Activated naive CD4-positive, alpha-beta T cell treated with anti-CD3 and anti-CD28 coated beads for 36 hours (primary cell): ENCODE measurements at regions of chr21 and their contacts with region 1.

Region 1: DNA sequence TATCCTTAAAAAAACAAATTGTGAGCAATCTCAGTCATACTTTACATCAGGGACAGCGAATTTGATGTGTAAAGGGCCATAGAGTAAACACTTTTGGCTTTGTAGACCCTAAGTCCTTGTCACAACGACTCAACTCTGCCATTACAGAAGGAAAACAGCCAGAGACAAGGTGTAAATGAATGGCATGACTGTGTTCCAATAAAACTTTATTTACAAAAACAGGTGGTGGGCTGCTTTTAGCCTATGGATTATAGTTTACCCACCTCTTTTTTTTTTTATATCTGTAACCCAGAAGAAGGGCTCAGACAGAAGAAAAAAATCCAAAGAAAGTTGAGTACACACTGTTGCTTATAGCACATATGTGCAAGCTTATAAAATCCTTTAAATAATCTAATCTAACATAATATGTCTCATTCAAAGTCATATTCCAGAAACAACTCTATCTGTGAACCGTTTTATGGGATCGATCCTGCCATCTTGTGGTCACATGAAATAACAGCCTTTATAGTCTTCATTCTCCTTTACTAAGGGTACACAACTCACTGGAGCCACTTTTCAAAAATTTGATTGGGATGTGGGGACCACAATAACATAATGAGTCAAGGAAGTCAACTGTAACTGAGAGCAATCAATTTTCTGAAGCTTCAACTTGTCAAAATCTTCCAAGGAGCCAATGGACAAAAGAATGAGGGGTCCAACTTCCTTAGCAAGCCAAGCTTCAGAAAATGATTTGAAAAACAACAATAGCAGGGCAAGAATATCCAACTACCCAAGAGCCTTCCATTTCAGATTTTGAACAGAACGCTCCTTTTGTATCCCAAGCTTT is 142.2 kb upstream of the KRTAP19-8 start:
- DNase-seq: peak; percentile 52
- H3K4me3 Mint-ChIP-seq: peak overlapping the region; percentile 87
- H3K27ac Mint-ChIP-seq: peak overlapping the region; percentile 98
- H3K4me1 Mint-ChIP-seq: peaks cover 75% of the 10 kb centered on the region
- H3K27me3 Mint-ChIP-seq: no peaks in the 10 kb centered on the region

Region 2: GRCh38 chr21:30942192-30942591 is 238.3 kb before region 1 on chr21:
- CTCF ChIA-PET with region 1: no interaction called
- intact Hi-C with region 1: no loop called
- DNase-seq: no peak
- H3K4me3 Mint-ChIP-seq: no peak overlapping the region
- H3K27ac Mint-ChIP-seq: no peak overlapping the region
- H3K4me1 Mint-ChIP-seq: no peaks in the 10 kb centered on the region
- H3K27me3 Mint-ChIP-seq: peaks cover 1% of the 10 kb centered on the region

Region 3: DNA sequence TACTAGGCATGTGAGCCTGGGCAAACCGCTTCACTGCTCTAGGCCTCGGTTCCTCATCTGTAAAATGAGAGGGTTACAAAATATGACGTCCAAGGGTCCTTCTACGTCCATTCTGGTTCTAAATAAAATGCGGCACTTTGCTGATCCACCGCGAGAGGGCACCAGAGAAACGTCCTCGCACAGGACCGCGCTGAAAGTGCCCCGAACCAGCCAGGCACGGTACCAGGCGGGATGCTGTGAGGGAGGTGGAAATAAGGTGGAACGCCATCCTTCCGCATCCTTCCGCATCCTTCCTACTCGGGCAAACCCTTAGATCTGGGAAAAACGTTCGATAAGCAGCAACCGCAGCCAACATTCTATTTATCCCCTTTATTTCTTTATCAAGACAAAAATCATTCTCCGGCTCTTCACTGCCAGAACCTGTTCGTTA is 81.9 kb before region 1 on chr21:
- CTCF ChIA-PET with region 1: interaction called, 19 read pairs
- intact Hi-C with region 1: loop called (anchors 1 kb)
- DNase-seq: peak; percentile 83
- H3K4me3 Mint-ChIP-seq: peak overlapping the region; percentile 29
- H3K27ac Mint-ChIP-seq: no peak overlapping the region
- H3K4me1 Mint-ChIP-seq: peaks cover 24% of the 10 kb centered on the region
- H3K27me3 Mint-ChIP-seq: peaks cover 3% of the 10 kb centered on the region

Region 4: DNA sequence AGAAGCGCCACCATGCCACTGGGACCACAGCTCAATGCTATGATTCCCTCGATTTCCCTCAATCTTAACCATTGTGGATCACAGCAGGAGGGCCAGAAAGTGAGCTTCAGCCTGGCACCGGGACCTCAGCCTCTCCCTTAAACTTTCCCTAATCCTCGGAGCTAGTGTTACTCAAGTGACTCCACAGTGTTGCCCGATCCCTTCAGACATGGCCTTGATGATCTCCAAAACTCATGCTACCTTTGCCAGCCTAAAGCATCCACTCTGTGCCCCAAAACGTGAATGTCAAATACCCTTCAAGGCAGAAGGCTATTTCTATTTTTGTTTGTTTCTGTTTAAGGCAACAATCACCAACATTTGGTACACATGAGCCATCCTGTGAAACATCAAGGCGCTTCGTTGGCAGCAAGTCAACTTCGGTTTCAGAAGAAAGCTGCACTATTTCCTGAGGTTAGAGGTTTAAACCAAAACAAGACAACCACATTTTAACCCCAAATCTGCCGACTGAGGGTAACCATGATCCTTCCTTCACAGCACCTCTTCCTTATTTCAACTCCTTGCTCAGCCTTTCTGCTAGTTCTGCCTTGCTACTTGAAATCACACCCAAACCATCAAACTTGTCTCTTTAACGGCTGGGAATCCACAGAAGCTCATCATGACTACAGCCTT is 47.8 kb before region 1 on chr21:
- CTCF ChIA-PET with region 1: interaction called, 23 read pairs
- intact Hi-C with region 1: loop called (anchors 1 kb)
- DNase-seq: peak; percentile 89
- H3K4me3 Mint-ChIP-seq: peak overlapping the region; percentile 32
- H3K27ac Mint-ChIP-seq: peak overlapping the region; percentile 83
- H3K4me1 Mint-ChIP-seq: peaks cover 64% of the 10 kb centered on the region
- H3K27me3 Mint-ChIP-seq: no peaks in the 10 kb centered on the region

Region 5: DNA sequence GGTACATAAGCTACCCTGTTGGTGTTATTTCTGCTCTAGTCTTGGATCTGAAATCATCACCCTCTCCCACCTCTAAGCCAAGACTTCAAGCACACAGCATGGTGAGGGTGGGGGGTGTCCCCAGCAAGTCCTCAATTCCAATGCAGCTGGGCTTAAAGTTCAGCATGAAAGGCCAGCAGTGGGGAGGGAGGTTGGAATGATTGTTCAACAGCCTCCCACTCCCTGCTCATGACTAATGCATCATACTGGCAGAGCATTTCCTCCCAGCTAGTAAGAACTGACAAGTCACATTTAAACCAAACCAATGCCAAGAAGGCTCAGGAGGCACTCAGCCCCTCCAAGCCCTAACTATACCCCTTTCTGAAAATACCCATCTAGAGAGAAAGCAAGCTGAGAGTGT is 113.5 kb after region 1 on chr21:
- CTCF ChIA-PET with region 1: no interaction called
- intact Hi-C with region 1: loop called (anchors 1 kb)
- DNase-seq: peak; percentile 88
- H3K4me3 Mint-ChIP-seq: no peak overlapping the region
- H3K27ac Mint-ChIP-seq: peak overlapping the region; percentile 84
- H3K4me1 Mint-ChIP-seq: peaks cover 44% of the 10 kb centered on the region
- H3K27me3 Mint-ChIP-seq: no peaks in the 10 kb centered on the region

Region 6: GRCh38 chr21:31354604-31355443 is 174.4 kb after region 1 on chr21:
- CTCF ChIA-PET with region 1: interaction called, 3 read pairs
- intact Hi-C with region 1: loop called (anchors 1 kb)
- DNase-seq: peak; percentile 94
- H3K4me3 Mint-ChIP-seq: peak overlapping the region; percentile 2
- H3K27ac Mint-ChIP-seq: peak overlapping the region; percentile 88
- H3K4me1 Mint-ChIP-seq: peaks cover 47% of the 10 kb centered on the region
- H3K27me3 Mint-ChIP-seq: no peaks in the 10 kb centered on the region

Region 7: GRCh38 chr21:31580866-31581276 is 400.4 kb after region 1 on chr21:
- CTCF ChIA-PET with region 1: interaction called, 29 read pairs
- intact Hi-C with region 1: no loop called
- DNase-seq: peak; percentile 88
- H3K4me3 Mint-ChIP-seq: no peak overlapping the region
- H3K27ac Mint-ChIP-seq: no peak overlapping the region
- H3K4me1 Mint-ChIP-seq: peaks cover 2% of the 10 kb centered on the region
- H3K27me3 Mint-ChIP-seq: no peaks in the 10 kb centered on the region